ENCODE measurements at regions of chr15 and their contacts with region 1.

Region 1: DNA sequence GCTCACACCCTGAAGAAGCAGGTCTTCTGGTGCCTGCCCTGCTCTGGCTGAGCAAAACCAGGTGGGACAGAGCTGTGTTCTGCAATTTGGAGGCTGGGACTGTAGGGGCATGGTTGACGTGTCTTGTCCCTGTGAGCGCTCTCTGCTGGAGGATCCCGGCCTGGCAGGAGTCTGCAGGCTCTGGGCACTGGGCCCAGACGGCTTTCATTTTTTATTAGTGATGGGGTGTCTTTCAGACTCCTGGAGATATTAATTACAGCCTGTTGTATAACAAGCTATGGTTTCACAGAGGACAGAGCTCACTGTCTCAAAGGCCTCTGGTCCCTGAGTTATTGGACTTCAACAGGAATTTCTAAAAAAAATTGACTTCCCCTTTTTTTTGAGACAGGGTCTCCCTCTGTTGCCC is 29.5 kb upstream of the ZNF710 start:
- DNase-seq: peak; percentile 70
- ATAC-seq: peak; percentile 99
- H3K4me3 ChIP-seq: no peak overlapping the region
- H3K27ac ChIP-seq: no peak overlapping the region
- H3K4me1 ChIP-seq: peaks cover 0 to 20% of the 10 kb centered on the region in 2 experiments; a peak in 2 of 4 replicates
- H3K27me3 ChIP-seq: no peaks in the 10 kb centered on the region
- CTCF ChIP-seq: peak; percentile 87 to 97 (median 91)
- POLR2A ChIP-seq: no peak
- RAD21 ChIP-seq: peak; percentile 63

Region 2: DNA sequence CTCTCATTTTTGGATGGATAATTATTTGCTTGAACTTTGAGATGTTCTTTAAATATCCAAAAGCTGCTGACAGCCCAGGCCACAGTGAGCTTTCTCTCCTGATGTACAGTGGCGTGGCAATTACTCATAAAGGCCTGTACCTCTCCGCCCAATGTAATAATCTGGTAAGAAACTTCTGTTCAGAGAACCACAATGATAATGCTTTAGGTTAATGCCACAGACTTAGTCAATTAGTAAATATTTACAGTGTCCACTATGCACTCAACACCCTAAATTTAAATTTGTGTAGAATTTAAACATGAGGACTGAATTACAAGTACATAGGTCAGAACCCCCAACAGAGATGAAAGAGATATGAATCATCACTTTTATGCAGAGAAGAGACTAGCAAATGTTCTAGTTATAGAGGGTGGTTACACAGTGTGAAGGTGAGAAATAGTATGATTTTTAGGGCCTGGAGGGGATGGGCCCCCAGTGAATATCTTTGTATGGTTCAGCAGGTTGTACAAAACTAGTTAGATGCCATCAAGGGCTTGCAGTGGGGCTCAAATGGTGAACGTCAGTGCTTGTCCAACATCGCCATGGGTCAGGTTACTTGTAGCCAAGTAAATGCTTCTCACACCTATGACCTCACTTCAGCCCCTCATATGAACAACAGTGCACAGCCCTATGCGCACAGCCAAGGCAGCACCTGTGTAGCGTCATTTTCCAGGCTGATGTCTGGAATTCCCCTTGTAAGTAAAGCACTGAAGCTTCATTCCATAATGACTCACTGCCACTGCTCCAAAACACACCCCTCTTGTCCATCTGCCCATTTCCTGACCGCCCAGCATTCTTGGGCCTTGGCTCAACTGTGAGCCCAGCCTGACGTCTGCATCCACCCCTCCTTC is 870.0 kb before region 1 on chr15:
- CTCF ChIA-PET with region 1: no interaction called
- POLR2A ChIA-PET with region 1: no interaction called
- RAD21 ChIA-PET with region 1: no interaction called
- intact Hi-C with region 1: no loop called
- DNase-seq: peak; percentile 87
- ATAC-seq: peak; percentile 84
- H3K4me3 ChIP-seq: peak overlapping the region in 1 of 2 experiments; percentile 40; a peak in 2 of 4 replicates
- H3K27ac ChIP-seq: peak overlapping the region; percentile 42; the same call in 1 of the 2 replicates
- H3K4me1 ChIP-seq: peaks cover 33 to 59% of the 10 kb centered on the region in 2 experiments
- H3K27me3 ChIP-seq: no peaks in the 10 kb centered on the region
- CTCF ChIP-seq: no peak
- POLR2A ChIP-seq: no peak
- RAD21 ChIP-seq: no peak

Region 3: GRCh38 chr15:89893696-89894455 is 77.7 kb before region 1 on chr15 and contains the start of gene AP3S2:
- CTCF ChIA-PET with region 1: interaction called, 11 read pairs
- POLR2A ChIA-PET with region 1: no interaction called
- RAD21 ChIA-PET with region 1: no interaction called
- intact Hi-C with region 1: loop called (anchors 1 kb)
- DNase-seq: peak; percentile 92
- ATAC-seq: peak; percentile 86
- H3K4me3 ChIP-seq: peak within 1 kb of the TSS; percentile 68 to 85
- H3K27ac ChIP-seq: peak within 1 kb of the TSS; percentile 74
- H3K4me1 ChIP-seq: peaks cover 0 to 16% of the 10 kb centered on the region in 2 experiments; a peak in 2 of 4 replicates
- H3K27me3 ChIP-seq: no peaks in the 10 kb centered on the region
- CTCF ChIP-seq: no peak
- POLR2A ChIP-seq: no peak
- RAD21 ChIP-seq: peak; percentile 17; the same call in 1 of the 2 replicates
- total RNA-seq, gene AP3S2: 23.3 TPM

Region 4: DNA sequence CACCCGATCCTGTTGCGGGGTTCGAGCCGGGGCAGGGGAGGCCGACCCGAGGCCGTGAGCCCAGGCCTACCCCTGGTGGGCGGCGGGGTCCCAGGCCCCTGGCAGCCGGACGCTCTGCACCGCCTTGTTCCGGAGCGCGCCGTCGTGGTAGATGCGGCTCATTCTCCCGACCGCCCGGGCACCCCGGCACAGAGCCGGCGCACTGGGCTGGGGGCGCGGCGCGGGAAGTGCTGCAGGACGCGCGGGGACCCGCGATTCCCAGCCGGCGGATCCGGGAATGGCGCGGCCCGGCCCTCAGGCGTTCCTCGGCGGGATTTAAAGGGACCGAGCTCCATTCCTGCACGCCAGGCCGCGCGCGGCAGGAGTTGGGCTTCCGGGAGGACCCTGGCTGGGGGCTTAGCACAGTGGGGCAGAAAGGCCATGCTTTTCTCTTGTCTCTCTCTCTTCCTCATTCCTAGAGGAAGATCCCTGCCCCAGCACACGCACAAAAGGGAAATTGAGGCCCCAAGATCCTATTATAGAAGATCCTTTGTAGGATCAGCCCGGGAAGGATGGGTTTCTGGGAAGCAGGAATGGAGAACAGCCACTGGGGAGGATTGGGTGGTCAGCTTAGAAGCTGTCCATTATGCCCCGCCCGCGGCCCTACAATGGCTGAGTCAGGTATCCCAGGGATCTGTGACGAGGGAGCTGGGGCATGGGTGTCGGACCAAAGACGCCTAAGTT is 58.8 kb before region 1 on chr15 and contains the start of gene ARPIN:
- CTCF ChIA-PET with region 1: interaction called, 6 read pairs
- POLR2A ChIA-PET with region 1: interaction called, 3 read pairs
- RAD21 ChIA-PET with region 1: no interaction called
- intact Hi-C with region 1: loop called (anchors 5 kb)
- DNase-seq: no peak
- ATAC-seq: peak; percentile 69
- H3K4me3 ChIP-seq: peak within 1 kb of the TSS; percentile 63 to 77
- H3K27ac ChIP-seq: peak within 1 kb of the TSS; percentile 74
- H3K4me1 ChIP-seq: peaks cover 26 to 50% of the 10 kb centered on the region in 2 experiments
- H3K27me3 ChIP-seq: no peaks in the 10 kb centered on the region
- CTCF ChIP-seq: no peak
- POLR2A ChIP-seq: no peak
- RAD21 ChIP-seq: no peak
- total RNA-seq, gene ARPIN: 8.8 TPM

Region 5: GRCh38 chr15:89958074-89958805 is 13.4 kb before region 1 on chr15:
- CTCF ChIA-PET with region 1: interaction called, 10 read pairs
- POLR2A ChIA-PET with region 1: no interaction called
- RAD21 ChIA-PET with region 1: no interaction called
- intact Hi-C with region 1: no loop called
- DNase-seq: no peak
- ATAC-seq: peak; percentile 42; the same call in 1 of the 2 replicates
- H3K4me3 ChIP-seq: no peak overlapping the region
- H3K27ac ChIP-seq: no peak overlapping the region
- H3K4me1 ChIP-seq: peaks cover 2 to 5% of the 10 kb centered on the region in 2 experiments; a peak in 2 of 4 replicates
- H3K27me3 ChIP-seq: no peaks in the 10 kb centered on the region
- CTCF ChIP-seq: no peak
- POLR2A ChIP-seq: no peak
- RAD21 ChIP-seq: no peak

Region 6: DNA sequence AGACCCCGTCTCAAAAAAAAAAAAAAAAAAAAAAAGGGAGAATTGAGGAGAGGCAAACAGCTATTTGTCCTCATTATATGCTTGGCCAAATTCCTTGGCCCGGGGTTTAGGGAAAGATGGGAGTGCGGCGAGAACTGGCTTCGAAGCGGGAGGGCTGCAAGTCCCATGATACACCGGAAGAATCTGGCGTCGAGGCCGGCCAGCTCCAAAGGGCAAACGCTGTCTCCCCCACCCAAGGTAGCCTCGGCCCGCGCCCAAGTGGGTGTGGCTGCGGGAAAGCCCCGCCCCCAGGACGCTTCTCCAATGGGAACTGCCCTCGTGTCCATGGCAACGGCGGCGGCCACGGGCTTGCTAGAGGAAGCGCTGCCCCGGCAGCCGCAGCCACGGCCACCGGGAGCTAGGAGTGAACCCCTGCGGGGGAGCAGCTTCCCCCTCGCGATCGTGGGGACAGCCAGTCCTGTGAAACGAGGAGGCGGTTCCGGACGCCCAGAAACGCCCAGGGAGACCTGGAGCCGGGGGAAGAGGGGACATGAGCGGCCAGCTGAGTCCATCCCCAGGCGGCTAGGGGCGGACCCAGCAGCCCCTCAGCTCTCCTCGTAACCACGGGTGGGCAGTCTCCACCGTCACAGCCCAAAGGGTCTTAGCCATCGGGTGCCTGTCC is 277.7 kb after region 1 on chr15 and contains the start of gene TTLL13:
- CTCF ChIA-PET with region 1: no interaction called
- POLR2A ChIA-PET with region 1: no interaction called
- RAD21 ChIA-PET with region 1: no interaction called
- intact Hi-C with region 1: no loop called
- DNase-seq: peak; percentile 56
- ATAC-seq: peak; percentile 98
- H3K4me3 ChIP-seq: peak within 1 kb of the TSS; percentile 54 to 64
- H3K27ac ChIP-seq: peak within 1 kb of the TSS; percentile 15; the same call in 1 of the 2 replicates
- H3K4me1 ChIP-seq: peaks cover 7 to 18% of the 10 kb centered on the region in 2 experiments; a peak in 3 of 4 replicates
- H3K27me3 ChIP-seq: no peaks in the 10 kb centered on the region
- CTCF ChIP-seq: no peak
- POLR2A ChIP-seq: no peak
- RAD21 ChIP-seq: no peak
- total RNA-seq, gene TTLL13: 1.0 TPM

Measured in HCT116 (cell line).